ENCODE measurements at regions of chr2 and their contacts with region 1.

Region 1: DNA sequence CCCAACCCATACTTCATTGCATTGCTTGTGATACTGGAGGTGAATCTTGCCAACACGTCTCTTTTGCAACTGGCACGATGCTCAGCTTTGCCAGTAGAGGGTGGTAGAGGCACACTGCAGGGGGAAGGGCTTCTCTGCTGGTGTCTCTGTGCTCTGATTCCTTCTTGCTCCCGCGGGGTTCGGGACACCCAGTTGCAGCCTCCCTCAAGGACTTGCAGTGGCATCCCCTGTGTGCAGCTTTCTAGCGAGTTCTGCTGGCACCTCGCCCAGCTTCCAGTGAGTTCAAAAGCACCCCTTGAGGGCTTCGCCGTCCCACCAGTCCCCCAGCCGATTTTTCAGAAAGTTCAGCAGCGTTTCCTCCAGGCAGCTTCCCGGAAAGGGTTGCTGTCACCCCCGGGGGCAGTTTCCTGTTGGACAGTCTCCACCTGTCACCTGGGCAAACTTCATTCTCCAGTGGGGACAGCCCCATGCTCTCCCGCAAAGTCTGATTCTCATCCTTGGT is 35.3 kb upstream of the EN1 start:
- DNase-seq: peak in 3 of 5 donors; percentile 21 to 33 (median 30)
- H3K4me3 ChIP-seq: no peak overlapping the region
- H3K27ac ChIP-seq: no peak overlapping the region
- H3K4me1 ChIP-seq: no peaks in the 10 kb centered on the region
- H3K27me3 ChIP-seq: no peaks in the 10 kb centered on the region
- CTCF ChIP-seq: no peak
- EP300 ChIP-seq: no peak
- POLR2A ChIP-seq: no peak

Region 2: GRCh38 chr2:117921520-117921919 is 961.2 kb before region 1 on chr2:
- intact Hi-C with region 1: no loop called
- DNase-seq: no peak
- H3K4me3 ChIP-seq: no peak overlapping the region
- H3K27ac ChIP-seq: no peak overlapping the region
- H3K4me1 ChIP-seq: no peaks in the 10 kb centered on the region
- H3K27me3 ChIP-seq: no peaks in the 10 kb centered on the region
- CTCF ChIP-seq: no peak
- EP300 ChIP-seq: no peak
- POLR2A ChIP-seq: no peak

Region 3: DNA sequence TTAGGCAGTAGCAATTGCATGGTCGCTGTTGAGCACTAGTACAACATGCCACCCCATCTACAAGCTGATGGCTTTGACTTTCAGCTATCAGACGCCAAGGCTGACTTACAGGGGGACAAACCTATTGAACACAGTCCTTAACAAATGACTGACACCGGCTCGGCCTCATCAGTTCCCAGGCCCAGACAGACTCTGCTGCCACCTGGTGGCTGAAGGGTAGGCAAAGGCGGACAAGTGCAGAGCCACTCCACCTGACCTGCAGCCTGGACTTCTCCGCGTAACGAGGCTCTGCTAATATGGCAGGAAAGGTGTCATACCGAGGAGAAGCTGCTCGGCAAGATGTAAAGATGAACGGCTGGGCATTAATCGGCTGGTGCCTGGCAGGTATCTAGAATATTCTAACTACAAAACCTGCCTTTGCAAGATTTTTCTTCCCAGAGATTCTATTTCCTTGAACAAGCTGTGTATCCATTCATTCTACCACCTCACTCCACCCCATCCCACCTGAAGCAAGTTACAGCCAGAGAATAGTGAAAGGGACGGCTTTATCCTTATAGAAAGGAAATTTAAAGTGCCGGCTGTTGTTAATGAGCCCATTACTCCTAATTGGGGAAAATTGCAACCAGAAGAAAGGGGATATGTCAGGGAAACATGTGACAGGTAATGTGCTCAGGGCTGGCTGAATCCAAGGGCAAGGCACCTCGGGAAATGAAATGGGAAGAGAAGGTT is 408.3 kb after region 1 on chr2:
- intact Hi-C with region 1: loop called in 1 of 4 experiments (anchors 10 kb)
- DNase-seq: peak in 4 of 5 donors; percentile 76 to 83 (median 79)
- H3K4me3 ChIP-seq: no peak overlapping the region
- H3K27ac ChIP-seq: no peak overlapping the region
- H3K4me1 ChIP-seq: no peaks in the 10 kb centered on the region
- H3K27me3 ChIP-seq: no peaks in the 10 kb centered on the region
- CTCF ChIP-seq: peak; percentile 44 to 68 (median 64)
- EP300 ChIP-seq: no peak
- POLR2A ChIP-seq: no peak

Measured in ovary (tissue), 10 donors.